PC-3 (cell line): ENCODE measurements at regions of chr2 and their contacts with region 1.

Region 1: DNA sequence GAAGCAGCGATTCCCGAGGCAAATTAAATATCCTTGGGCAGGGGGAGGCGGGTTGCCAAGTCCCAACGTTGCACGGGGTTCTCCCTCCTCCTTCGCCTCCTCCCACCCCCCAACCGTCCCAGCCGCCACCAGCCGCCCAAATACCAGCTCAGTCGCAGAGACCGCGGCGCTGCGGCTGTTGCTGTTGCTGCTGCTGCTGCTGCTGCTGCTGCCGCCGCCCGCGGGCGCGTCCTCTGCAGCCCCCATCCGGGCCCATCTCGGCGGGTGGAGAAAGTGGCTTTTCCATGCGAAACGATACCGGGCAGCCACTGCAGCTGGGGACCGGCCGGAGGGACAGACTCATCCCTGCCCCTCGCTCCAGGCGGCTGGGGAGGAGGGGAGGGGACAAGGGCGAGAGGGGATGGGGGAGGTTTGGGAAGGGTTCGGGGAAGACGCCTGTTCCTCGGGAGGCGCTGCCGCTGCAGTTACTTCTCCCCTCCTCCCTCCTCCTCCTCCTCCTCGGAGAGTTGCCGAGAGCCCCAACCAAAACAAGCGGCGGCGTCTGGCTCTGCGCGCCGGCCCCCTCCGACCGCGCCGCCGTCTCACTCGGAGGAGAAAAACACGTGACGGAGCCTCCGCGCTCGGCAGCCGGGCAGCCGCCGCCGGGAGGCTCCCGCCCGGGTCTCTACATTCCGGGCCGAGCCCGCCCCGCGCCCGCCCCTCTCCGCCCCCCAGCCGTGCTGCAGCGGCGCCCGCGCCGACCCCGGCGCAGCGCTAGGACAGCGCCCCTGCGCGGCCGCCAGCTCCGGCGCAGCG is at the start of gene IRS1:
- DNase-seq: peak; percentile 75
- ATAC-seq: peak; percentile 13
- H3K4me3 ChIP-seq: peak within 1 kb of the TSS; percentile 88
- H3K27ac ChIP-seq: peak within 1 kb of the TSS; percentile 88
- H3K4me1 ChIP-seq: peaks cover 36% of the 10 kb centered on the region
- H3K27me3 ChIP-seq: no peaks in the 10 kb centered on the region
- CTCF ChIP-seq: no peak
- total RNA-seq, gene IRS1: 38.8 and 43.8 TPM in 2 replicates

Region 2: GRCh38 chr2:225735844-225736243 is 1063.5 kb before region 1 on chr2:
- CTCF ChIA-PET with region 1: no interaction called
- POLR2A ChIA-PET with region 1: no interaction called
- intact Hi-C with region 1: loop called (anchors 2 kb)
- DNase-seq: peak; percentile 95
- ATAC-seq: peak; percentile 48
- H3K4me3 ChIP-seq: no peak overlapping the region
- H3K27ac ChIP-seq: peak overlapping the region; percentile 81
- H3K4me1 ChIP-seq: peaks cover 34% of the 10 kb centered on the region
- H3K27me3 ChIP-seq: no peaks in the 10 kb centered on the region
- CTCF ChIP-seq: no peak

Region 3: DNA sequence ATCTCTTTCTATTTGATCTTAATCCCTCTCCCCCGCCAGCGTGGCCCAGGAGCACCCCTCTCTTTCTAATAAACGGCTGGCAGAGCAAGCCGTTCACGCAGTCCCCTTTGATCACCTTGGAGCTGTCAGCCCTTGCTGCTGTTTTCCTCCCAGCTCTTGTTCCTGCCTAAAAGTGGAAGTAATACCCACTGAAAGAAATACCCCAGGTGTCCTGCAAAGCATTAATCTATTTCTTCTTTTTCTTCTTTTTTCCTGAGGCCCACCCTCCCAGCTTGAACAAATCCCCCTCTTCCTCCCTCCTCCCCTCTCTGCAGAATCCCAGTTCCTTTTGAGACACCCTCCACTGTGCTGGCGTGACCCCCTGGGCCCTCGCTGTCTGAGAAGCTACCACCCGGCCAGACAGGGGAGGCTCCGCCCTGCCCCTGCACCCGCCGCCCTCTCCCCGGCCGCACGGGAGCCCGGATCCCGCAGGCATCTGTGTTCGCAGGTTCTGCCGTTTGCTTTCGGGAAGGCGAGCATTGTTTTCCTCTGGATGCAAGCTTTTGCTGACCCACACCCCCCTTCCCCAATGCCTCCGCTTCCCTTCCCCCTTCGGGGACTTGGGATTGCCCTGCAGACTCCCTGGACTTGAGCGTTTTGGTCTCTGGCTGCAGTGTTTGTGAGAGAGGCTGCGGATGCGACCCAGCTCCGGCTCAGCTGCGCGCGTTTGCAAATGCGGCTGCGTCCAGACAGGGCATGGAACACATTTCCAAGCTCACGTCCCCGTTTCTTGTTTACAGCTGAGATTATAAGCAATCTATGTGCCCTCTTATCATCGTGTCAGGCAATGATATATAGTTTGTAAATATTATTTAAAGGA is 768.4 kb before region 1 on chr2:
- CTCF ChIA-PET with region 1: interaction called, 4 read pairs
- POLR2A ChIA-PET with region 1: no interaction called
- intact Hi-C with region 1: loop called (anchors 2 kb)
- DNase-seq: peak; percentile 65
- ATAC-seq: peak; percentile 86
- H3K4me3 ChIP-seq: peak overlapping the region; percentile 73
- H3K27ac ChIP-seq: peak overlapping the region; percentile 64
- H3K4me1 ChIP-seq: peaks cover 12% of the 10 kb centered on the region
- H3K27me3 ChIP-seq: no peaks in the 10 kb centered on the region
- CTCF ChIP-seq: no peak

Region 4: DNA sequence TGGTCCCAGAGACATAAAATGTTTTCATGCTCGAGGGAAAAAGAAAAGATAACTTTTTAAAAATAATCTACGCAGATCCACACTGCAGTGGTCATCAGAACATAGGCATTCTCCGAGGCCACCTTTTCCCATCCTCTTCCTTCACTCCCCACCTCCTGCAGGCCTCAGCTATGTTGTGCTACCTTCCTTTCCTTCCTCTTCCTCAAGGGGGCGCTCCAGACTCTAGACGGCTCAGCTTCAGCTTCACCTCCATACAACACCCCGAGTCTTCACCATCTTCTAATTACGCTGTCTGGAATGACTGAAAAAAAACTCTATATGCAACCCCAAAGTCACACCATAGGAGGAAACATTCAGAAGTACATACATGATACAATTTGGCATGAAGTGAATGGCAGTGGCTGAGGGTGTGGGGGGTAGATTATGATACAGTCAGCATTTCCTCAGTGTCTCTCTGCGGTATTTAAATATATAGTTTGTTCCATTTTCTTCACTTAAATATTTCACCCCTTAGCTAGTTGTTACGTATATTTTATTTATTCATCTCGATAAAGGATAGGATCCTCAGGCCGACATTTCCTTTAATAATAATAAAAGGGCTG is 583.4 kb before region 1 on chr2:
- CTCF ChIA-PET with region 1: interaction called, 4 read pairs
- POLR2A ChIA-PET with region 1: interaction called, 23 read pairs
- intact Hi-C with region 1: loop called (anchors 2 kb)
- DNase-seq: peak; percentile 69
- ATAC-seq: peak; percentile 63
- H3K4me3 ChIP-seq: no peak overlapping the region
- H3K27ac ChIP-seq: no peak overlapping the region
- H3K4me1 ChIP-seq: peaks cover 32% of the 10 kb centered on the region
- H3K27me3 ChIP-seq: no peaks in the 10 kb centered on the region
- CTCF ChIP-seq: peak; percentile 89

Region 5: GRCh38 chr2:226984750-226985582 is 185.6 kb after region 1 on chr2:
- CTCF ChIA-PET with region 1: interaction called, 8 read pairs
- POLR2A ChIA-PET with region 1: no interaction called
- intact Hi-C with region 1: loop called (anchors 2 kb)
- DNase-seq: peak; percentile 75
- ATAC-seq: peak; percentile 83
- H3K4me3 ChIP-seq: no peak overlapping the region
- H3K27ac ChIP-seq: no peak overlapping the region
- H3K4me1 ChIP-seq: 0 out of 2 replicates have a peak, but pooled peaks cover 3% of the 10 kb centered on the region
- H3K27me3 ChIP-seq: no peaks in the 10 kb centered on the region
- CTCF ChIP-seq: peak; percentile 79